Lower lobe of right lung (tissue), 2 donors: ENCODE measurements at regions of chr12 and their contacts with region 1.

Region 1: DNA sequence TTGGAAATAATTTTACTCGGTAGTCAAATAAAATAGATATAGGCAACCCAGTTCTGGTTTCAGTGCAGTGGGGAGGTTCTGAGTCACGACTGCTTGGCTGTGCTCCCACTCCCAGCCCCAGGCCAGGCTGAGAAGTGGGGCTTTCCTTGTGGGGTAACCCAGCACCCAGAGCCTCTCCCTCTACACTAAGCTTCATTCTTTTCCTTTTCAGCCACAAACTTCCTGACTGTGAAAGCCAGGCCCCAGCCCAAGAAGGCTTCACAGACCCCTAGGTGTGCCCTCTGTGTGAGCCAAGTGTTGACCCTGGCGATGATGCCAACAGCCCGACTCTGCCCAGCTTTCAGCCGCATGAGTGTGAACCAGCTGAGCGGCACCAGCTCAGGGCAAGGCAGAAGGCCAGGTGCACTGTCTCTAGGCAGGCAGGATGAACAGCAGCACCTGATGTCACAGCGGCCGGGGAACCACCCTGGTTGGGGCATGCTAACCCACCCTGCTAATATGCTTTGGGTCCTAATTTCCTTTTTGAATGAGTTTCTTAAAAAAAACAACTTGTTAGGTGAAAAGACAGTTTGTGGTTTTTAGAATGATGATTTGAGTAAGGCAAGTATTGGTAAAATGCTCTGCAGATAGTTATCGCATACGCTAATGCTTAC is 42.2 kb upstream of the ATP23 start:
- DNase-seq: no peak
- ATAC-seq: peak; percentile 43 to 63
- H3K4me3 ChIP-seq: no peak overlapping the region
- H3K27ac ChIP-seq: peak overlapping the region; percentile 98
- H3K4me1 ChIP-seq: peaks cover 63% of the 10 kb centered on the region
- H3K27me3 ChIP-seq: no peaks in the 10 kb centered on the region
- CTCF ChIP-seq: no peak

Region 2: GRCh38 chr12:57655541-57656240 is 243.4 kb before region 1 on chr12:
- intact Hi-C with region 1: no loop called
- DNase-seq: no peak
- ATAC-seq: no peak
- H3K4me3 ChIP-seq: no peak overlapping the region
- H3K27ac ChIP-seq: no peak overlapping the region
- H3K4me1 ChIP-seq: peaks cover 6% of the 10 kb centered on the region
- H3K27me3 ChIP-seq: no peaks in the 10 kb centered on the region
- CTCF ChIP-seq: no peak

Region 3: DNA sequence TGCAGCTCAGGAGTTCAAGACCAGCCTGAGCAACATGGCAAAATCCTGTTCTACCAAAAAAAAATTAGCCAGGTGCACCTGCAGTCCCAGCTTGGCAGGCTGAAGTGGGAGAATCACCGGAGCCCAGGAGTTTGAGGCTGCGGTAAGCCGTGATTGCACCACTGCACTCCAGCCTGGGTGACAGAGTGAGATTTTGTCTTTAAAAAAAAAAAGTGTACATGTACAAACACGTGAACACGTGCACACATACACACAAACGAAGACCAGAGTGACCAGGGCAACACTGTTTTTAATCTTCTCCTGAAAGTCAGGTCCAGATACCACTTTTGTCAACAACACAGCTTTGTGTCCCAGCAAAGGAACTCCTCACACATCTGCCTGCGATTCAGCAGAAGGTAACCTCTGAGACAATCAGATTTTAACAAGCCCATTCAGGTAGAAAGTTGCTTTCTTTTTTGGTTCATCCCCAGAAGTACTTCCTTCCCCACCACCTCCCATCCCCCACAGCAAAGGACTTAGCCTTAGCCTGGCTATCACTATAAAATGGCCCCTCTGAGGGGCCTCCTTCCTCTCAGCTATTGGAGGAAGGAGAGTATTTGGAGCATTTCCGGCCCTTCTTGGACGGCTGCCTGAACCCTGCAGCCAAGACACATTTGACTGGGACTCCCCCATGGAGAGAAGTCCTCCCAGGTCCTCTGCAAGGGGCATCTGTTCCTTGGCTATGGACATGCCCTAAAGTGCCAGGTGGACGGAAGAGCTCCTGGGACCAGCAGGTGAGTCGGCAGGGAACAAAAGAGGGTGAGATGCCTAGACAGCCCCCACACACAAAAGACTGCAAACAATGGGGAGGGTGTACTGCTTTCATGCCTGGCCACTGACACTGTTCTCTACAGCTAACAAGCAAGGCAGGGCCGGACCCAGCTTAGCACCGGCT is 62.4 kb before region 1 on chr12:
- intact Hi-C with region 1: loop called (anchors 10 kb)
- DNase-seq: no peak
- ATAC-seq: peak; percentile 34 to 59
- H3K4me3 ChIP-seq: peak overlapping the region; percentile 41
- H3K27ac ChIP-seq: peak overlapping the region; percentile 67
- H3K4me1 ChIP-seq: peaks cover 100% of the 10 kb centered on the region
- H3K27me3 ChIP-seq: no peaks in the 10 kb centered on the region
- CTCF ChIP-seq: no peak